T-cell (primary cell): ENCODE measurements at regions of chr6 and their contacts with region 1.

Region 1: GRCh38 chr6:136945072-136945471 is 23.0 kb downstream of the SLC35D3 start:
- DNase-seq: no peak
- ATAC-seq: no peak
- H3K4me3 ChIP-seq: no peak overlapping the region
- H3K4me3 Mint-ChIP-seq: no peak overlapping the region
- H3K27ac ChIP-seq: no peak overlapping the region
- H3K27ac Mint-ChIP-seq: no peak overlapping the region
- H3K4me1 ChIP-seq: no peaks in the 10 kb centered on the region
- H3K4me1 Mint-ChIP-seq: no peaks in the 10 kb centered on the region
- H3K27me3 ChIP-seq: peaks cover 0 to 3% of the 10 kb centered on the region in 2 experiments
- H3K27me3 Mint-ChIP-seq: peaks cover 9 to 17% of the 10 kb centered on the region in 2 donors

Region 2: GRCh38 chr6:136262940-136263339 is 682.1 kb before region 1 on chr6:
- CTCF ChIA-PET with region 1: no interaction called
- POLR2A ChIA-PET with region 1: no interaction called
- DNase-seq: no peak
- ATAC-seq: peak in 1 of 4 experiments; percentile 18
- H3K4me3 ChIP-seq: no peak overlapping the region
- H3K4me3 Mint-ChIP-seq: no peak overlapping the region
- H3K27ac ChIP-seq: no peak overlapping the region
- H3K27ac Mint-ChIP-seq: no peak overlapping the region
- H3K4me1 ChIP-seq: no peaks in the 10 kb centered on the region
- H3K4me1 Mint-ChIP-seq: peaks cover 36 to 45% (median 37%) of the 10 kb centered on the region in 3 donors
- H3K27me3 ChIP-seq: no peaks in the 10 kb centered on the region
- H3K27me3 Mint-ChIP-seq: no peaks in the 10 kb centered on the region

Region 3: GRCh38 chr6:136930528-136930927 is 14.5 kb before region 1 on chr6:
- CTCF ChIA-PET with region 1: no interaction called
- POLR2A ChIA-PET with region 1: no interaction called
- DNase-seq: no peak
- ATAC-seq: no peak
- H3K4me3 ChIP-seq: no peak overlapping the region
- H3K4me3 Mint-ChIP-seq: no peak overlapping the region
- H3K27ac ChIP-seq: no peak overlapping the region
- H3K27ac Mint-ChIP-seq: no peak overlapping the region
- H3K4me1 ChIP-seq: no peaks in the 10 kb centered on the region
- H3K4me1 Mint-ChIP-seq: no peaks in the 10 kb centered on the region
- H3K27me3 ChIP-seq: peaks cover 2 to 11% of the 10 kb centered on the region in 2 experiments
- H3K27me3 Mint-ChIP-seq: peaks cover 46 to 49% of the 10 kb centered on the region in 2 donors

Region 4: DNA sequence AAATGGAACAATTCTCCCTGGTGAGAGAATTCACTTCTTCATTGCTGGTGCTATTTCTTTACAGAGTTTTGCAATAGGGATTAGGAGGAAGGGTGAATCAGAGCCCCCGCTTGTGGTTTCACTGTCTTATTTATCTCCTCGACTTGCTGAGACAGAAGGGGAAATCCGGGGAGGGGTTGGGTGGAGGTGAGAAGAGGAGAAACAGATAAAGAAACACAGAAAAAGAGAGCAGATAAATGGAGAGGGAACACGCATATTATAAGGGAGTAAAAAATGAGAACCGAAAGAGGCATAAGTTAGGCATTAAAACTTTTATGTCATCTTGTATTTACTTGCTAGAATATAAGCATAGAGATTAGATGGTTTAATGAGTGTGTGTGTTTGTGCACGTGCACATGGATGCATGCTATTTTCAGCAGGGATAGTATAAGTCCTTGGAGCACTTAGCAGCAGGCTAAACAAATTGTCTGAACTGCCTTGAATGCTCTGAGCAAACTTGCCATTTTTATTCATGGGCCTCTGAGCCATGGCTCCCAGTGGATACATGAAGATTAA is 444.2 kb after region 1 on chr6:
- CTCF ChIA-PET with region 1: interaction called in 1 of 2 experiments, 11 read pairs
- POLR2A ChIA-PET with region 1: no interaction called
- DNase-seq: peak; percentile 27 to 82 (median 62)
- ATAC-seq: peak; percentile 99 to 100 (median 99)
- H3K4me3 ChIP-seq: peak overlapping the region; percentile 2
- H3K4me3 Mint-ChIP-seq: peak overlapping the region; percentile 45 to 85 (median 62)
- H3K27ac ChIP-seq: peak overlapping the region; percentile 81
- H3K27ac Mint-ChIP-seq: peak overlapping the region; percentile 90 to 95
- H3K4me1 ChIP-seq: peaks cover 22 to 47% of the 10 kb centered on the region in 2 experiments
- H3K4me1 Mint-ChIP-seq: peaks cover 65 to 86% (median 70%) of the 10 kb centered on the region in 3 donors
- H3K27me3 ChIP-seq: no peaks in the 10 kb centered on the region
- H3K27me3 Mint-ChIP-seq: no peaks in the 10 kb centered on the region